ENCODE measurements at regions of chr4 and their contacts with region 1.

Region 1: DNA sequence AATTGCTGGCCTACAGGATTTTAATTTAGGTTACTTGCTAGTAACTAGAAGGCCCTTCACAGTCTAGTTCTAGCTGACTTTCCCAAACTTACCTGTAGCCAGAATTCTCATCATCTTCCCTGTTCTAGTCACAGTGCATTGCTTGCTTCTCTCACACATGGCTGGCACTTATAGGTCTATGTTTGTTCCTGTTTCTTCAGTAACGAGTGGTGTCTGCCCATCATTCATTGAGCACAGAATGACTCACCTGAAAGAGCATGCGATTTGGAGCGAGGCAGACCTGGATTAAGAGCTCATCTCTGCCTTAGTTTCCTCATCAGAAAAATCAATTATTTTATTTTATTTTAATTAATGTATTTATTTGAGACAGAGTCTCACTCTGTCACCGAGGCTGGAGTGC is 201.7 kb upstream of the ANK2 start:
- DNase-seq: no peak
- ATAC-seq: no peak
- H3K4me3 ChIP-seq: no peak overlapping the region
- H3K27ac ChIP-seq: no peak overlapping the region
- H3K4me1 ChIP-seq: no peaks in the 10 kb centered on the region
- H3K27me3 ChIP-seq: no peaks in the 10 kb centered on the region; a peak in 2 of 5 replicates
- CTCF ChIP-seq: no peak
- EP300 ChIP-seq: no peak
- POLR2A ChIP-seq: no peak
- RAD21 ChIP-seq: no peak

Region 2: DNA sequence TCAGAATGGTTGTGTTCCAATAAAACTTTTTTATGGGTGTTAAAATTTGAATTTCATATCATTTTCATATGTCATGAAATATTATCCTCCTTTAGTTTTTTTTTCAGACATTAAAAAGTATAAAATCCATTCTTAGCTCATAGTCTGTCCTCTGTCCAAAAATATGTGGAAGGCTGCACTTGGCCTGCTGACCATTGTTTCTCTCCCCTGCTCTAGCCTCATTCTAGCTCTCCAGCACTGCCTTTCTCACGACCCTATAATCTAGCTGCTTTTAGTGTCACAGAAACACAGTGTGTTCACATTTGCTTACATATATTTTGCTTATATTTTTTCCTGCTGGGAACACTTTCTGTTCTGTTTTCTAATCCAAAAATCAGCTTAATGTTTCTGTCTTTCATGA is 36.6 kb after region 1 on chr4:
- CTCF ChIA-PET with region 1: no interaction called
- POLR2A ChIA-PET with region 1: no interaction called
- in situ Hi-C with region 1: no loop called
- intact Hi-C with region 1: loop called (anchors 1 kb)
- DNase-seq: no peak
- ATAC-seq: no peak
- H3K4me3 ChIP-seq: no peak overlapping the region
- H3K27ac ChIP-seq: no peak overlapping the region
- H3K4me1 ChIP-seq: no peaks in the 10 kb centered on the region
- H3K27me3 ChIP-seq: no peaks in the 10 kb centered on the region
- CTCF ChIP-seq: no peak
- EP300 ChIP-seq: no peak
- POLR2A ChIP-seq: no peak
- RAD21 ChIP-seq: no peak

Region 3: DNA sequence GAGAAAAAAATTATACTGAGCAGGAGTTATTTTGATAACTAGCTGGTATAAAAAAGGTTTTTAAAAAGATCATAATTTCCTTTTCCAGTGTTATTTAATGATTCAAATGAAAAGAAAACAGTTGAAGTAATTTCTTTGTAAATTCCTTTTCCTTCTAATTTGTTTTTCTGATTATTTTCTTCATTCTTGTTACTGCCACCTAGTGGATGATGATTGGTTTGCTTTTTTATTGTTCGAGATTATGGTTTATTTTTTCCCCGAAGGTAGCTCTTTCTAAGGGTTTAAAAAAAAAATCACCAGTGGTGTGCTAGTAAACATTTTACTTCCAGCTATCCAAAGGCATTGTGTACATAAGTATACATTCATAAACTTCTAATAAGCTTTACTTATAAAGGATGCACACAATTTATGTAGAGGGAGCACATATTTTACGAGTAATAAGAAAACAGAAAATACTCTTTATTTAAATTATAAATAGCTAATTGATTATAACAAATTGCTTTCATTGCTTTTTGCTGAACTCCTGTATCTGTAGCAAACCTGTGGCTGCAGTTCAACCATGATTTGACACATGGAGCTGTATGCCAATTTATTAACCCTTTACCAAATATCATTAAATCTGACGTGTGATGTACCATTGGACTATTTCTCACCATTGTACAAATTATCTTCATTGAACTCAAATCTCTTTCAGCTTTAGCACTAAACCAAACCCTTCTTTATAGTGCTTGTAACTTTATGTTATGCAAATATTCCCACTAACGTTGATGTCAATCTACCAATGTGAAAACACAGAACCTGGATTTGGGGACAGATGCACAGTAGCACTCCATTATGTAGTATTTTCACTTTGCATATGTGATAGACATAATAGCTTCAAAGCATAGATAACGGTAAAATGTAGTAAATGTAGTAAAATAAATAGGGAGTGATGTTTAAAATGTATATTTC is 103.9 kb after region 1 on chr4:
- CTCF ChIA-PET with region 1: no interaction called
- POLR2A ChIA-PET with region 1: no interaction called
- in situ Hi-C with region 1: no loop called
- intact Hi-C with region 1: no loop called
- DNase-seq: peak; percentile 9
- ATAC-seq: no peak
- H3K4me3 ChIP-seq: no peak overlapping the region
- H3K27ac ChIP-seq: no peak overlapping the region
- H3K4me1 ChIP-seq: no peaks in the 10 kb centered on the region
- H3K27me3 ChIP-seq: no peaks in the 10 kb centered on the region
- CTCF ChIP-seq: peak; percentile 16; the same call in 1 of the 2 replicates
- EP300 ChIP-seq: no peak
- POLR2A ChIP-seq: no peak
- RAD21 ChIP-seq: no peak

Measured in HepG2 (cell line).